HEK293 (cell line): ENCODE measurements at regions of chr12 and their contacts with region 1.

Region 1: DNA sequence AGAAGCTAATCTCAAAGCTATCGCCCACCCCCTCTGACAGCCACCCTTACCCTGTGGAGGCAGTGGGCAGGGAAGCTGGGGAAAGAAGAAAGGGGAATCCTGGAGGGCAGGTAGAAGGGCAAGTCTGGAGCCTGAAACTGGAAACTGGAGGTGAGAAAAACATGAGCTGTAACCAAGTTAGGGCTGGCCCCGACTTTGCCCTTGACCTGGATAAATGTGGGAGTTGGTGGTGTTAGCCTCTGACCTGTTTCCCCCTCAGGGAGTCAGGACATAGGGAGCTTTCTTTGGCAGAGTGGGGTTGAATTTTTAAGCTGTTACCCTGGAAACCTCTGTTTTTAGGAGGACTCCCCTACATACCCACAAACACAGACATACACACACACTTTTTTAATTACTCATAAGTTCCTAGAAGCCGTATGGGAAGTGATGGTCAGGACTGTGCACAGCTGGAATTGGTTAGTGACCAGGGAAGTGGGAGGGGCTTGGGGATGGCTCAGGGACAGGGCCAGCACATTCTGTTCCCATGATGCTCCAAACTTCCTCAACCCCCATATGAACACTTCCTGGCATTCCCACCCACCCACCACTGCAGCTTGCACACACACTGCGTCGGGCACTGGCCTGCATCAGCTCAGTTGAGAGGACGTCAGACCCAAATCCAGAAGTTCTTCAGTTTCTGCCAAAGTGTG is 5.0 kb upstream of the MMP19 start:
- H3K4me3 ChIP-seq: no peak overlapping the region
- H3K27ac ChIP-seq: no peak overlapping the region
- H3K4me1 ChIP-seq: no peaks in the 10 kb centered on the region; the same call in 1 of the 2 replicates
- CTCF ChIP-seq: no peak

Region 2: DNA sequence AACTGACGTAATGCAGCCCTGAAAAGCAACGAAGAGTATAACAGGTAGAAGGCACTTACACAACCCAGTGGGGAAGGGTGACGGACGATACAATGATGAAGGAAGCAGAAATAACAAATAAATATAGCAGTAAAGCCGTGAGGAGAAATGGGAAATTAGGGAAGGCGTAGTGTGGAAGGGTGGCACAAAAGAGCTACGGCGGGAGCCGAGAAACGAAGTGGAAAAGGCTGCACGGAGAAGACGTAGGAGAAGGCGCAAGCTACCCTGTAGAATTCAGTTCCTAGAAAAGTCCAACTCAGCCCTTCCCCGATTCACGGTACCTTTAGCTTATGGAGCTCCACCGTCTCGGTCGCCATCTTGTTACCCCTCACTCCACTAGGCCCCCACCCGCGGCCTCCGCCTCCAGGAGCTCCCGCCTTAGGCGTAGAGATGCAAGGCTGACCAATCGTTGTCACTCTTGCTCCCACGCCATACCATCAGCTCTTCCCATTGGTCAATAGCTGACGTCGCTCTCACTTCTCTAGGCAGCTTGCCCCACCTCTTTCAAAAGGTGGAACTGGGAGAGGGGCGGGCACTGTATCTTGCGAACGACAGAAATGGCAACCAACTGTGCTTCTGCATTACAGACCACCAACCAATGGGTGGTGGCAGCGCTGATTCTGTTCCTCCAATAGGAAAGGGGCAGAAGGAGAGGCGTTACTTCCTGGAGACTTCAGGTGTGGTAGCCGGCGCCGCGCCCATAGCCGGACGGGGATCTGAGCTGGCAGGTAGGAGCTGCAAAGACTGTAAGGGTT is 30.2 kb before region 1 on chr12 and contains the starts of genes ORMDL2 and SARNP:
- CTCF ChIA-PET with region 1: no interaction called
- POLR2A ChIA-PET with region 1: interaction called, 14 read pairs
- H3K4me3 ChIP-seq: peak within 1 kb of the TSS; percentile 83
- H3K27ac ChIP-seq: peak within 1 kb of the TSS; percentile 72
- H3K4me1 ChIP-seq: peaks cover 6% of the 10 kb centered on the region; the same call in 1 of the 2 replicates
- CTCF ChIP-seq: no peak